ENCODE measurements at regions of chrX and their contacts with region 1.

Region 1: GRCh38 chrX:153554519-153555167 is 37.2 kb downstream of the ATP2B3 start:
- DNase-seq: peak; percentile 80
- ATAC-seq: peak; percentile 82

Region 2: DNA sequence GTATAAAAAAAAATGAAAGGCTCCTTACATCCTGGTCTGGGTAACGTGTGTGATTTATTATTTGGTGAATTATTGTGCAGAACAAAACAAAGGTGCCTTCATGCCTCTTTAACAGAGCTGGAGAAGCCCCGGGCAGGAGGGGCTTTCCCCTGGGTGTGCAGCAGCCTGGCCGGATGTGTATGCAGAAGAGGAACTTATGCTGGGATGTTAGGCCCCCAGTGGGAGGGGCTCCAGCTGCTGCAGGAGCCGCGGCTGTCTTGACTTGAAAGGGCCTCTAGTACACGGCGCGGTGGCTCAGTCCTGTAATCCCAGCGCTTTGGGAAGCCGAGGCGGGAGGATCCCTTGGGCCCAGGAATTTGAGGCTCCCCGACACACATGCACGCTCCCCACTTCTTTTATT is 28.3 kb after region 1 on chrX:
- intact Hi-C with region 1: loop called (anchors 2 kb)
- DNase-seq: peak; percentile 62
- ATAC-seq: peak; percentile 43

Region 3: GRCh38 chrX:153667956-153668396 is 113.3 kb after region 1 on chrX:
- intact Hi-C with region 1: loop called (anchors 2 kb)
- DNase-seq: peak; percentile 90
- ATAC-seq: peak; percentile 88

Measured in Right ventricle myocardium superior (tissue), 1 donor.